Dendritic cell treated with granulocyte-macrophage colony-stimulating factor and Interleukin-4, amounts not matched to agents 40 ng/mL and 50 ng/mL, for 4 days (primary cell): ENCODE measurements at regions of chr9 and their contacts with region 1.

Region 1: DNA sequence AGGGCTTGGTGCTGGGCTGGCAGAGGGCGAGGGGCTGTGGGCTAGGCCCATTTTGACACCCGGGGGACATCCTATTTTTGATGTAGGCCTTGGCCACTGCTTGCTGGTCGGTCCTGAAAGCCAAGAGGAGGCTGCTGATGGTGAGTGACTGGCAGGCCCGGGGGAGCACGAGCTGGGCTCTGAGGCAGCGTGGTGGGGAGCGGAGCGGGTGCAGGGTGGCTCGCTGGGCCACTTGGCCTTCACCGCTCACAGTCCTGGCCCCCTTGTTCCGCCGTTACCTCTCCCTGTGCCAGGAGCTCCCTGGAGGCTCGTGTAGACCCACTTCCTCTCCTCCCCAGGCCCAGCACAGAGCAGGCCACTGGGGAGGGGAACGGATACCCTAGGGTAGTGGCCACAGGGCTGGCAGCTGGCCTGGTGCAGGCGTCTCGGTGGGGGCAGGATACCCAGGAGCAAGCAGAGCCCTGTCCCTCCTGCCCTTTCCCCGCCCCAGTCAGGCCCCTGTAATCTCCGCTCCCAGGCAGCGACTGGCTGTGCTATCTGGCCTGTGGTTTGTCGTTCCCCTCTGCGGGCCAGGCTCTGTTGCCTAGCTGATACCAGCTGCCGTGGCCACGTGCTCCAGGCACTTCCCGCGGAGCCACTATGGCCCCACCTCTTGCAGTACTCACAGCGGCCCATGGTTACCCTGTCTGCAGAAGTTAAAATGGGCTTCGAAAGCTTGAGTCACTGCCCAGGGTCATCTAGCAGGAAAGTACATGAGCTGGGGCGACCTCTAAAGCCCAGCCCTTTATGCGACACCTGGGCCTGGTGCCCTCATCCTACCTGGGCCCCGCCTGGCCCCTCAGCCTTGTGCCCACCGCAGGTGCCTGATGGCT is 11.7 kb upstream of the DOLPP1 start:
- H3K4me3 Mint-ChIP-seq: peak overlapping the region; percentile 44
- H3K27ac Mint-ChIP-seq: peak overlapping the region; percentile 86
- H3K4me1 Mint-ChIP-seq: peaks cover 22% of the 10 kb centered on the region
- H3K27me3 Mint-ChIP-seq: no peaks in the 10 kb centered on the region

Region 2: DNA sequence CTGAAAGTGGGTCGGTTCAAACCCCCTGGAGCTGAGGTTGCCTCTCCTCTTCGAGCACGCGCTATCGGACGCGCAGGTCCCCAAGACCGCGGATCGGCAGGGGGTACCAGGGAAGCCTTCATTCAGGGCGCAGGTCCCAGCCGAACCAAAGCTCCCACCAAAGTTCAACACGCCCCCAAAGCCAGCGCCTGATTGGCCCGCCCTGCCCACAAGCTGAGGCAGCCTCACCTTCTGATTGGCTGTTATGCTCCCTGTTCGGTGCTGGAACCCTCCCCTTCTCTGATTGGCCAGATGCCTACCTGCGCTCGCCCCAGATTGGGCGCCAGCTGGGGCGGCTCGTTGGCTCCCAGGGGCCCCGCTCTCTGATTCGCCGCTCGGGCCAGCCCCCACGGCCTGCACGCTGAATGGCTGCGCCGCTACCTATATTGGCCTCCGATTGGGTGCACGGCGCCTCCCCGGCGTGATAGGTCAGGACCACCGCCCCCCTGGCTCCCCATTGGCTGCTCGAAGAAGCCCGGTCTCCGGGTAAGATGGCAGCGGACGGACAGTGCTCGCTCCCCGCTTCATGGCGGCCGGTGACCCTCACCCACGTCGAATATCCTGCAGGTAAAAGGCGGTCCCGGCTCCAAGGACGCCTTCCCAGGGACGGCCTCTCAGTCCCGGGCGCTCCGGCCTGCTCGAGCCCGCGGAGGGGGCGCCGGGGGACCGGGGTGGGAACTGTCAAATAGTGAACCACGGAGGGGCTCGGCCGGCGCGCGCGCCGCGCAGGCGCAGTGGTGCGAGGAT is 11.6 kb after region 1 on chr9 and contains the start of gene DOLPP1:
- intact Hi-C with region 1: loop called (anchors 1 kb)
- H3K4me3 Mint-ChIP-seq: peak within 1 kb of the TSS; percentile 86
- H3K27ac Mint-ChIP-seq: peak within 1 kb of the TSS; percentile 84
- H3K4me1 Mint-ChIP-seq: peaks cover 31% of the 10 kb centered on the region
- H3K27me3 Mint-ChIP-seq: no peaks in the 10 kb centered on the region

Region 3: DNA sequence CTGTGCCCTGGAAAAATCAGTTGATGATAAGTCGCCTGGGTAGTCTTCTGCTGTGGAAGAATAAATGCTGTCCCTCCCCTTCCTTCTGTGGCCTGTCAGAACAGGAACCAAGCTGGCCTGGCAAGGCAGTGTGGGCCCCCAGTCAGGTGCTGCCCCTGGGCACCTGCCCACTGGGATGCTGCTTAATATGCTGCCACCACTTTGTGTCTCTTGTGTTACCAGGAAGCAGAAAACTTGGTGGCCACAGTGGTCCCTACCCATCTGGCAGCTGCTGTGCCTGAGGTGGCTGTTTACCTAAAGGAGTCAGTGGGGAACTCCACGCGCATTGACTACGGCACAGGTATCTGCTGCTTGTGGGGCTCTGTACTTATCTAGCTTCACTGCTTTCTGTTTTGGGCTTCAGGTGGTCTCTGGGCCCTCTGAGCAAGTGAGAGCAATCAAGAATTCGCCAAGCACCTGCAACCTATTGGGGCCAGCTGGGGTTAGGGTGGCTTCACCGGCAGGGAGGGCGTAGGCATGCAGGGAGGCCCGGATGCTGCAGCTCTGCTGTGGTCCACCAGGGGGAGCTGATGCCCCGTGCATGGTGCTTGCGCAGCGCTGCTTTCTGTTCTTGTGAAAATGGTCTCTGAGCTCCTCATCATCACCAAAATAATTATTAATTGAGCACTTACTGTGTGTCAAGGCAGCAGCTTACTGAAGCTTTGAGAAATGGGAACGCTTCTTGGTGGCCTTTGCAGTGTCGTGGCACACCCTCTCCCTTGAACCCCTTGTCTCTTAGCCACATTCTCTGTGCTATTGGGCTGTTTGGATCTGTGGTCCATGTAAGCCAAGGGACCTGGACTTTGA is 62.3 kb after region 1 on chr9:
- intact Hi-C with region 1: no loop called
- H3K4me3 Mint-ChIP-seq: no peak overlapping the region
- H3K27ac Mint-ChIP-seq: no peak overlapping the region
- H3K4me1 Mint-ChIP-seq: peaks cover 8% of the 10 kb centered on the region
- H3K27me3 Mint-ChIP-seq: no peaks in the 10 kb centered on the region

Region 4: DNA sequence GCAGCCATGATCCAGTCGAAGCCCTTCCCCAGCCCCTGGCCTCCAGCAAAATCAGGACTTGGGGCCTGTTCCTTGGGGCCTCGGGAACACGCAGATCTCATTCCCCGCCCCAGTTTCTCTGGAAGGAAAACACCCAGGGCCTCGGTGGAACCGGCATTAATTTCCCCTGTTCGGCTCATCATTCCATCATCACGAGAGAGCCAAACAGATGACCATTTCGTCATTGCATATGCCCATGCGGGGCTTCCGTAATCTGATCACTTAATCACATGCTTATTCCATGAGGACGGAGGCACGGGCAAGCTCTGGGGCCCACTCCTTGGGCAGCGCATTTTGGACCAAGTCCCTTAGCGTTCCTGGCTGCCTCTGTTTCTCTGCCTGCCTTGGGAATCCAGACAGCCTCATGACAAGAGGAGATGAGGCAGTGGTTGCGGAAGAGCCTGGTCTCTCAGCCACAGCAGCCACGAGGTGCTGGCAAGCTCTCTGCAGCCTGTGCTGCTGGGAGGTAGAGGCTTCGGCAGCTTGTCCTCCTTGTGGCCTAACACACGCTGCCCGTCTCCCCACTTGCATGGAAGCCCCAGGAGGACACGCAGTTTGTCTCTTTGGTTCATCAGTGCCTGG is 173.8 kb after region 1 on chr9:
- intact Hi-C with region 1: no loop called
- H3K4me3 Mint-ChIP-seq: no peak overlapping the region
- H3K27ac Mint-ChIP-seq: no peak overlapping the region
- H3K4me1 Mint-ChIP-seq: peaks cover 23% of the 10 kb centered on the region
- H3K27me3 Mint-ChIP-seq: peaks cover 21% of the 10 kb centered on the region